HCT116 (cell line): ENCODE measurements at regions of chr11 and their contacts with region 1.

Region 1: GRCh38 chr11:3807909-3808860 is at the start of gene PGAP2:
- DNase-seq: peak; percentile 61
- ATAC-seq: peak; percentile 85
- H3K4me3 ChIP-seq: peak within 1 kb of the TSS; percentile 81 to 85
- H3K27ac ChIP-seq: peak within 1 kb of the TSS; percentile 43
- H3K4me1 ChIP-seq: peaks cover 5 to 26% of the 10 kb centered on the region in 2 experiments; a peak in 3 of 4 replicates
- H3K27me3 ChIP-seq: no peaks in the 10 kb centered on the region
- CTCF ChIP-seq: peak; percentile 54 to 75 (median 75); a peak in 5 of 6 replicates
- POLR2A ChIP-seq: no peak
- RAD21 ChIP-seq: peak; percentile 70
- total RNA-seq, gene PGAP2: 30.5 TPM

Region 2: GRCh38 chr11:2750682-2751387 is 1057.3 kb before region 1 on chr11:
- CTCF ChIA-PET with region 1: no interaction called
- POLR2A ChIA-PET with region 1: no interaction called
- RAD21 ChIA-PET with region 1: no interaction called
- intact Hi-C with region 1: no loop called
- DNase-seq: no peak
- ATAC-seq: no peak
- H3K4me3 ChIP-seq: no peak overlapping the region
- H3K27ac ChIP-seq: no peak overlapping the region
- H3K4me1 ChIP-seq: peaks cover 9 to 14% of the 10 kb centered on the region in 2 experiments
- H3K27me3 ChIP-seq: no peaks in the 10 kb centered on the region
- CTCF ChIP-seq: no peak
- POLR2A ChIP-seq: no peak
- RAD21 ChIP-seq: no peak

Region 3: GRCh38 chr11:3764266-3764665 is 43.9 kb before region 1 on chr11:
- CTCF ChIA-PET with region 1: no interaction called
- POLR2A ChIA-PET with region 1: no interaction called
- RAD21 ChIA-PET with region 1: no interaction called
- intact Hi-C with region 1: no loop called
- DNase-seq: no peak
- ATAC-seq: no peak
- H3K4me3 ChIP-seq: no peak overlapping the region
- H3K27ac ChIP-seq: no peak overlapping the region
- H3K4me1 ChIP-seq: no peaks in the 10 kb centered on the region
- H3K27me3 ChIP-seq: no peaks in the 10 kb centered on the region
- CTCF ChIP-seq: no peak
- POLR2A ChIP-seq: no peak
- RAD21 ChIP-seq: no peak

Region 4: DNA sequence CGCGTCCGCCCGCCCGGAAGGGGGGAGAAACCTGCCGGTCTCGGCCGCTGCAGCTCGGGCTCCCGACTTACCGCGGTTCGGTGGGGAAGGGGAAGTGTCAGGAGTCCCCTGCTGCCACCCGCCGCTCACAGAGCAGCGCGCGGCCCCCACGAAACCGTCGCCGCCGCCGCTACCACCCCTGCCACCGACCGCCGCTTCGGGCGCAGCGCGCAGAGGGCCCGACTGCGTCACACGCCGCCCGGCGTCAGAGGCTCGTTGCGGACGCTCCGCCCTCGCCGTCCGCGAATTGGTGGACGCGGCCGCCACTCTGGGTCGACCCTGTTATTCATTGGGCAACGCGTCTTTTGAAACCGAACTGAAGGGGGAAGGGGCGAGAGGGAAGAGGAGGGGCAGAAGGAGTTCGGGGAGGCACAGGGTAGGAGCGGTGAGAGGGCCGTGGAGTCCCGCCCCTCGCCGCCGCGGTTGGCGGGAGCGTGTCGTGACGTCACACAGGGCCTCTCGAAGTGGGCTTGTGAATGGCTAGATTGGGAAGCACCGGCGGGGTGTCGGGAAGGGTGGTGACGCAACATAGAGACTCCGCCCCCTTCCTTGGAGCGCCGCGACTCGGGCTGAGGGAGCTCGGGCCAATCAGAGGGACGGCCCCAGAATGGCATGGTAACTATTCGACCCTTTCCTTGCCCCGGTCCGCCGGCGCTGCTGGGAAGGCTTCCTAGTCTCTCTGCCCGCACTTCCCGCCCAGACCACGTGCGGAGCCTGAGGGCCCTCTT is 10.7 kb before region 1 on chr11 and contains the start of gene NUP98:
- CTCF ChIA-PET with region 1: interaction called, 22 read pairs
- POLR2A ChIA-PET with region 1: interaction called, 7 read pairs
- RAD21 ChIA-PET with region 1: no interaction called
- intact Hi-C with region 1: no loop called
- DNase-seq: peak; percentile 99
- ATAC-seq: peak; percentile 96
- H3K4me3 ChIP-seq: peak within 1 kb of the TSS; percentile 86 to 100
- H3K27ac ChIP-seq: peak within 1 kb of the TSS; percentile 85
- H3K4me1 ChIP-seq: peaks cover 14 to 28% of the 10 kb centered on the region in 2 experiments
- H3K27me3 ChIP-seq: no peaks in the 10 kb centered on the region
- CTCF ChIP-seq: no peak
- POLR2A ChIP-seq: peak; percentile 80
- RAD21 ChIP-seq: no peak
- total RNA-seq, gene NUP98: 98.4 TPM

Region 5: GRCh38 chr11:3824714-3825472 is 16.7 kb after region 1 on chr11:
- CTCF ChIA-PET with region 1: interaction called, 16 read pairs
- POLR2A ChIA-PET with region 1: no interaction called
- RAD21 ChIA-PET with region 1: no interaction called
- intact Hi-C with region 1: no loop called
- DNase-seq: no peak
- ATAC-seq: peak; percentile 97
- H3K4me3 ChIP-seq: no peak overlapping the region
- H3K27ac ChIP-seq: no peak overlapping the region
- H3K4me1 ChIP-seq: peaks cover 0 to 5% of the 10 kb centered on the region in 2 experiments; a peak in 1 of 4 replicates
- H3K27me3 ChIP-seq: no peaks in the 10 kb centered on the region
- CTCF ChIP-seq: peak; percentile 67 to 96 (median 90)
- POLR2A ChIP-seq: no peak
- RAD21 ChIP-seq: peak; percentile 49

Region 6: DNA sequence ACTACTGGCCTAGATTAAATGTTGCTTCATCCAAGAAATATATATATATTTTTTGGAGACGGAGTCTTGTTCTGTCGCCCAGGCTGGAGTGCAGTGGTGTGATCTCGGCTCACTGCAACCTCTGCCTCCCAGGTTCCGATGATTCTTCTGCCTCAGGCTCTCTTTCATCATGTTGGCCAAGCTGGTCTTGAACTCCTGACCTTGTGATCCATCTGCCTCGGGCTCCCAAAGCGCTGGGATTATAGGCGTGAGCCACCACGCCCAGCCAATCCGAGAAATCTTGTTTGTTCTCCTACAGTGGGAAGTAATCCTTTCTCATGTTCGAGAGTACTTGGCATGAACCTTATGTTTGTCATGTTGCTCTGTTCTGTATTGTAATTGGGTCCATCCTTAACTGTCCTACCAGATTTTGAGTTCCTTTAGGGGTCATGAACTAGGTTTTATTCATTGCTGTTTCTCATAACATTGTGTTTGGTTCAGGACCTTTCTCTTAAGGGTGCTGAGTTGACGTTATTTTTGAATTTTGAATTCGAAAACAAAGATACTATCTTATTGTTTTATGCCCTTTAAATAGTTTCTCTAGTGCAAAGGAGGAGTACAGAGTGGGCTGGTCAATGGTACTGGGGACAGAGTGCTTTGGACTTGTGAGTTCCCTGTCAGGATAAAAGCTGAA is 172.9 kb after region 1 on chr11:
- CTCF ChIA-PET with region 1: no interaction called
- POLR2A ChIA-PET with region 1: no interaction called
- RAD21 ChIA-PET with region 1: no interaction called
- intact Hi-C with region 1: no loop called
- DNase-seq: no peak
- ATAC-seq: no peak
- H3K4me3 ChIP-seq: no peak overlapping the region
- H3K27ac ChIP-seq: no peak overlapping the region
- H3K4me1 ChIP-seq: no peaks in the 10 kb centered on the region
- H3K27me3 ChIP-seq: no peaks in the 10 kb centered on the region
- CTCF ChIP-seq: no peak
- POLR2A ChIP-seq: no peak
- RAD21 ChIP-seq: no peak

Region 7: DNA sequence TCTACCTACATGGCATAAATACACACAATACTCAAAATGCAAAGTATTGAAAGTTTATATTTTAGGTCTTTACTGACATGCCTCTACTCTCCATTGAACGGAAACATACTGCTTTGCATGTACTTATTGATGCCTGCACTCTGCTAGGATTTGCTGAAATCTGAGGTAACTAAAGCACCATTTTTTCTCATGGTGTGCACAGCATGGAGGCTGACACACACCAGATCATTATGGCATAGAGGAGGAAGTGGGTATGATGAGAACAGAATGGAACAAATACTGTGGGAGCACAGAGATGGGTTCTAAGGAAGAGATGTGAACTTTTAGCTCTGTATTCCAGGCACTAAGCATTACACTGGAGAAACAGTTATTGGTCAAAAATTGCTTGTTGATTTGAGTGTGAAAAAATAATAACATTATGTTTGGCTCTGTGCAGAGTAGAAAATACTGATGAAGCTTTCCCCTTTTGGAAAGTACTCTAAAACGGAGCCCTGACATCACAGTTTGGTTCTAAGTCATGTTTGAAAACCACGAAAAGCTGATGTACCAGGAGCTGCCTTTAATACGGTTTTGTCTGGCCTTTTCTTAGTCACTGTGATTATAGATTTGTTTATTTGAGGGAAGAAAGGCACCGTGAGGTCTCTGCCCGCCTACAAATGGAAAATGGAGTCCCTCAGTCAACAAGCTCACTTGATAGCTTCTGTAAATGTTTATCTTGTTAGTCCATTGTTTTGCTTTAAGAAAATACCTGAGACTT is 990.4 kb after region 1 on chr11:
- CTCF ChIA-PET with region 1: no interaction called
- POLR2A ChIA-PET with region 1: no interaction called
- RAD21 ChIA-PET with region 1: no interaction called
- intact Hi-C with region 1: no loop called
- DNase-seq: no peak
- ATAC-seq: no peak
- H3K4me3 ChIP-seq: no peak overlapping the region
- H3K27ac ChIP-seq: no peak overlapping the region
- H3K4me1 ChIP-seq: no peaks in the 10 kb centered on the region
- H3K27me3 ChIP-seq: peaks cover 28% of the 10 kb centered on the region
- CTCF ChIP-seq: no peak
- POLR2A ChIP-seq: no peak
- RAD21 ChIP-seq: no peak